ENCODE measurements at regions of chr3 and their contacts with region 1.

Region 1: GRCh38 chr3:38651154-38651789 is 1.8 kb upstream of the SCN5A start:
- DNase-seq: peak; percentile 59
- H3K4me3 Mint-ChIP-seq: no peak overlapping the region
- H3K27ac Mint-ChIP-seq: no peak overlapping the region
- H3K4me1 Mint-ChIP-seq: no peaks in the 10 kb centered on the region
- H3K27me3 Mint-ChIP-seq: no peaks in the 10 kb centered on the region
- CTCF ChIP-seq: peak; percentile 83

Region 2: DNA sequence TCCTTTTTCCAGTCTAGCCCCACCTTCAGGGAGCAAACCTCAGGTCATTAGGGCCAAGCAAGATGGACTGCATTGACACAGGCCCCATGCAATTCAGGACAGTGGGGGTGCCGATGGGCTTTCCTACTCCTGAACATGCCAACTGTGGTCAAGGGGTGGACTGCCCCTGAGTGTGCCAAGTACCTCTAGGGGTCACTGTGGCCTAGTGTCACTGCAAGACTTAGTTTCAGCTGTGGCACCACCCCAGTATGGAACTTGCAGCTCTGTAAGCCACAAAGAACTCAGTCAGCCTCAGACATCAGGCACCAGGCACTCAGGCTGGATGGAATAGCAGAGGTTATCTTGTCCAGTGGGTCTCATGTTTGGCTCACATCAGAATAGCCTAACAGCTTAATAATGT is 122.8 kb before region 1 on chr3:
- CTCF ChIA-PET with region 1: interaction called, 239 read pairs
- POLR2A ChIA-PET with region 1: no interaction called
- intact Hi-C with region 1: no loop called
- DNase-seq: no peak
- H3K4me3 Mint-ChIP-seq: no peak overlapping the region
- H3K27ac Mint-ChIP-seq: no peak overlapping the region
- H3K4me1 Mint-ChIP-seq: no peaks in the 10 kb centered on the region
- H3K27me3 Mint-ChIP-seq: no peaks in the 10 kb centered on the region
- CTCF ChIP-seq: no peak

Region 3: DNA sequence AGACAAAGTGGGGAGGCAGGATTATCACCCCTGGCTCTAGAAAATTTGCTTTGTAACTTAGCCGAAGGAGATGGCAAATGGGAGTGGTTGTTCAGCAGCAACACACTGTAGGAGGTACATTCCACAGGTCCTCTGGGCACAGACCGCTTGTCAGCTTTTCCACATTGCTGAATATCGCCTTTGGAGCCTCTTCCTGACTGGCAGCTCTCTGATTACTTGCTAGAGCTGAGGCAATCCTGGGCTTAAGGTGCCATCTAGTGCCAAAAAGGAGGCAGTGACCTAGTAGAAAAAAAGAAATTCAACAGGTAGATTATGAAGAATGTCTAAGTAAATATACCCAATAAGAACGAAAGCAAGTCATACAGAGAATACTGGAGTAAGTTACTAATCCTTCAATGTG is 11.3 kb after region 1 on chr3:
- CTCF ChIA-PET with region 1: interaction called, 13 read pairs
- POLR2A ChIA-PET with region 1: no interaction called
- intact Hi-C with region 1: no loop called
- DNase-seq: peak; percentile 55
- H3K4me3 Mint-ChIP-seq: no peak overlapping the region
- H3K27ac Mint-ChIP-seq: no peak overlapping the region
- H3K4me1 Mint-ChIP-seq: no peaks in the 10 kb centered on the region
- H3K27me3 Mint-ChIP-seq: peaks cover 70% of the 10 kb centered on the region
- CTCF ChIP-seq: peak; percentile 59

Region 4: GRCh38 chr3:38725726-38726419 is 74.6 kb after region 1 on chr3:
- CTCF ChIA-PET with region 1: no interaction called
- POLR2A ChIA-PET with region 1: no interaction called
- intact Hi-C with region 1: no loop called
- DNase-seq: no peak
- H3K4me3 Mint-ChIP-seq: no peak overlapping the region
- H3K27ac Mint-ChIP-seq: no peak overlapping the region
- H3K4me1 Mint-ChIP-seq: peaks cover 8% of the 10 kb centered on the region
- H3K27me3 Mint-ChIP-seq: peaks cover 24% of the 10 kb centered on the region
- CTCF ChIP-seq: no peak

Region 5: GRCh38 chr3:38843898-38844297 is 192.6 kb after region 1 on chr3:
- CTCF ChIA-PET with region 1: no interaction called
- POLR2A ChIA-PET with region 1: no interaction called
- intact Hi-C with region 1: loop called (anchors 2 kb)
- DNase-seq: peak; percentile 55
- H3K4me3 Mint-ChIP-seq: no peak overlapping the region
- H3K27ac Mint-ChIP-seq: no peak overlapping the region
- H3K4me1 Mint-ChIP-seq: no peaks in the 10 kb centered on the region
- H3K27me3 Mint-ChIP-seq: peaks cover 71% of the 10 kb centered on the region
- CTCF ChIP-seq: peak; percentile 53

Measured in MCF 10A (cell line).